ENCODE measurements at regions of chr1 and their contacts with region 1.

Region 1: DNA sequence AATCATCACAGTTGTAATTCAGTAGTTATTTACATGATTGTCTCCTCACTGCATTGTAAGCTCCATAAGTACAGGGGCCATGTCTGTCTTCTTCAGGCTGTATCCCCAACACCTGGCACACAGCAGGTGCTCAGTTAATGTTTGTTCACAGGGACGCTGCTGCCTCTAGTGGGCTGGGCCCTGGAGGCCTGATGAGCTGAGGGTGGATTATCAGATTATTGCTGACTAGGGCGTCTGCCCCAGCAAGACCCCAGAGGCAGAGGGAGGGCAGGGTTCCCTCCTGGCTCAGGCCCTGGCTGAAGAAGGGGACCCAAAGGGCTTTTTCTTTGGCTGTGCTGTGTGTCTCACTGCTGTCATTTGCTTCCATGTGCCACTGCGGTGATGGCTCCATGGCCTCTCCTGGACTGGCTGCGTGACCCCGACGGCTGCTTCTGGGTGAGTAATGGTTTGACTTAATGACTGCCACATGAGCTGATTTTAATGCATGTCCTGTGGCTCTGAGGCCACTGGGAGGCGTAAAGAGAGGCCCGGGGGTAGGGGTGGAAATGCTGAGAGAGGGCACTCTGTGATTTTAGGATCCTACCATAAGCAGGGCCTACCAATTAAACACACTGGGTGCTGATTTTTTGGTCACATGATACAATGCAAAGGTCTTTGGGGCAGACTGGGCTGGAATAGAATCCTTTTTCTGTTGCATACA is 20.8 kb upstream of the EPB41 start:
- DNase-seq: peak; percentile 22
- H3K4me3 ChIP-seq: no peak overlapping the region
- H3K27me3 ChIP-seq: no peaks in the 10 kb centered on the region
- CTCF ChIP-seq: peak; percentile 74

Region 2: DNA sequence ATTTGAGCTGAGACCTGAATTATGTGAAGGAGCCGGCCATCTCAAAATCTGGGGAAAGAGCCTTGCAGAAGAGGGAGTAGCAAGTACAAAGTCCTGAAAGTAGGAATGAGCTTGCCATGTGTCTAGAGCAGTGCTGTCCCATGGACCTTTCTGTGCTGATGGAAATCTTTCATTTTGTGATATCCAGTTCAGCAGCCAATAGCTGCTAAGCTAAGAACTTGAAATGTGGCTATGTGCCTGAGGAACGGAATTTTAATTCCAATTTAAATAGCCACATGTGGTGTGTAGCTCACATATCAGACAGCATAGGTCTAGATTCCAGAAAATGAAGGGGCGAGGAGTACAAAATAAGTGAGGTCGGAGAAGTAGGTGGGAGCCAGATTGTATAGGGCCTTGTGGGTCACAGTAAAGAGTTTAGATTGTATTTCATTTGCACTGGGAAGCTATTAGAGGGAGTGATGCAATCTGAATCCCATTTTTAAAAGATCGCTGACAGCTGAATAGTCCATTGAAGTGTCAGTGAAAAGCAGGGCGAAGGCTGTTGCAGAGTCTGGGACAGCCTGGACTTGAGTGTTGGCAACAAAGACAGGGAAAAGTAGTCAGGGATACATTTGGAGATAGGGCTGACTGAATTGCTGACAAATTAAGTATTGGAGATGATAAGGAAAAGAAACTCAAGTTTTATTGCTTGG is 149.9 kb after region 1 on chr1:
- CTCF ChIA-PET with region 1: interaction called, 10 read pairs
- POLR2A ChIA-PET with region 1: no interaction called
- DNase-seq: no peak
- H3K4me3 ChIP-seq: no peak overlapping the region
- H3K27me3 ChIP-seq: no peaks in the 10 kb centered on the region
- CTCF ChIP-seq: no peak